CD14-positive monocyte (primary cell): ENCODE measurements at regions of chr10 and their contacts with region 1.

Region 1: DNA sequence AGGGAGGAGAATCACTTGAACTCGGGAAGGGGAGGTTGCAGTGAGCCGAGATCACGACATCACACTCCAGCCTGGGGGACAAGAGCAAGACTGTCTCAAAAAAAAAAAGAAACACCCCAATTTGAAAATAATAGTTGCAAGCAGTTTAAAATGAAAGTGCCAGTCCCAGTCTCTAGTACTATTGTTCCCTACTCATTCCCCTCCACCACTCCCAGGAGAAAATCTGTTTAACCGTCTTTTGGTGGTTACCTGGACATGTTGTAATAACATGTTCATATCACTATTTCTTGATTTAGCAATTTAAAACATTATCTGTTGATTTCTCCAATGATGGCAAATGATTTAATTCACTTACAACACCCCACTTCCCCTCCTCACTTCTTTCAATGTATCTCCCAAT is 44.7 kb downstream of the KIFBP start:
- DNase-seq: no peak
- H3K4me3 ChIP-seq: no peak overlapping the region
- H3K4me3 Mint-ChIP-seq: no peak overlapping the region
- H3K27ac ChIP-seq: no peak overlapping the region
- H3K27ac Mint-ChIP-seq: peak overlapping the region in 2 of 7 donors; percentile 4 to 20
- H3K4me1 ChIP-seq: peaks cover 11 to 18% of the 10 kb centered on the region in 2 donors
- H3K4me1 Mint-ChIP-seq: peaks cover 30% of the 10 kb centered on the region
- H3K27me3 ChIP-seq: no peaks in the 10 kb centered on the region
- H3K27me3 Mint-ChIP-seq: peaks cover 2 to 5% (median 3%) of the 10 kb centered on the region in 3 donors
- CTCF ChIP-seq: no peak

Region 2: GRCh38 chr10:69075431-69075830 is 42.2 kb after region 1 on chr10:
- intact Hi-C with region 1: loop called in 1 of 2 experiments (anchors 5 kb)
- DNase-seq: no peak
- H3K4me3 ChIP-seq: peak overlapping the region in 1 of 3 experiments; percentile 7
- H3K4me3 Mint-ChIP-seq: peak overlapping the region in 1 of 2 donors; percentile 35
- H3K27ac ChIP-seq: peak overlapping the region in 1 of 2 donors; percentile 72
- H3K27ac Mint-ChIP-seq: peak overlapping the region; percentile 49 to 93 (median 76)
- H3K4me1 ChIP-seq: peaks cover 49 to 55% of the 10 kb centered on the region in 2 donors
- H3K4me1 Mint-ChIP-seq: peaks cover 55% of the 10 kb centered on the region
- H3K27me3 ChIP-seq: no peaks in the 10 kb centered on the region
- H3K27me3 Mint-ChIP-seq: peaks cover 0 to 1% (median 0%) of the 10 kb centered on the region in 3 donors
- CTCF ChIP-seq: no peak